Activated CD4-positive, alpha-beta T cell treated with anti-CD3 and anti-CD28 coated beads, Interleukin-2, amount 10 ng/mL, durations not matched to agents 7 days and 5 days (primary cell): ENCODE measurements at regions of chr2 and their contacts with region 1.

Region 1: GRCh38 chr2:106085181-106085940 is 108.7 kb downstream of the UXS1 start:
- DNase-seq: peak; percentile 70
- H3K4me3 Mint-ChIP-seq: no peak overlapping the region
- H3K27ac Mint-ChIP-seq: peak overlapping the region; percentile 76
- H3K4me1 Mint-ChIP-seq: peaks cover 48% of the 10 kb centered on the region
- H3K27me3 Mint-ChIP-seq: no peaks in the 10 kb centered on the region

Region 2: DNA sequence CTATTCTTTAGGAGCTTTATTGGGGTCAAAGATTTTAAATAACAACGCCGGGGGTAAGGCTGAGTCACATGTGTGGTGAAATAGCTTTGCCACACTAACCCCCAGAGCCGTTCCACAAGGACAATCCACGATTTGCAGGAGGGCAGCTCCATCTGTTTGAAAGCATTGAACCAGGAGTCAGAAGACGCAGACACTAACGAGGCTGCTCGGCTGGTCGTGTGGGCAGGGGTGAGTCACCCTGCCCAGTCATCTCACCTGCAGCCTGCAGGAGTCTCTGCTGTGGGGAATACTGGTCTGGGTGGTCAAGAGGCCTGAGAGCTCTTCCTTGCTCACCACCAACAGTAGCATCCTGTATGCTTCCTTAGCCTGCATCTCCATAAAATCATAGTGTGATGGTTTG is 489.8 kb before region 1 on chr2:
- CTCF ChIA-PET with region 1: no interaction called
- POLR2A ChIA-PET with region 1: no interaction called
- DNase-seq: no peak
- H3K4me3 Mint-ChIP-seq: no peak overlapping the region
- H3K27ac Mint-ChIP-seq: no peak overlapping the region
- H3K4me1 Mint-ChIP-seq: peaks cover 6% of the 10 kb centered on the region
- H3K27me3 Mint-ChIP-seq: no peaks in the 10 kb centered on the region

Region 3: DNA sequence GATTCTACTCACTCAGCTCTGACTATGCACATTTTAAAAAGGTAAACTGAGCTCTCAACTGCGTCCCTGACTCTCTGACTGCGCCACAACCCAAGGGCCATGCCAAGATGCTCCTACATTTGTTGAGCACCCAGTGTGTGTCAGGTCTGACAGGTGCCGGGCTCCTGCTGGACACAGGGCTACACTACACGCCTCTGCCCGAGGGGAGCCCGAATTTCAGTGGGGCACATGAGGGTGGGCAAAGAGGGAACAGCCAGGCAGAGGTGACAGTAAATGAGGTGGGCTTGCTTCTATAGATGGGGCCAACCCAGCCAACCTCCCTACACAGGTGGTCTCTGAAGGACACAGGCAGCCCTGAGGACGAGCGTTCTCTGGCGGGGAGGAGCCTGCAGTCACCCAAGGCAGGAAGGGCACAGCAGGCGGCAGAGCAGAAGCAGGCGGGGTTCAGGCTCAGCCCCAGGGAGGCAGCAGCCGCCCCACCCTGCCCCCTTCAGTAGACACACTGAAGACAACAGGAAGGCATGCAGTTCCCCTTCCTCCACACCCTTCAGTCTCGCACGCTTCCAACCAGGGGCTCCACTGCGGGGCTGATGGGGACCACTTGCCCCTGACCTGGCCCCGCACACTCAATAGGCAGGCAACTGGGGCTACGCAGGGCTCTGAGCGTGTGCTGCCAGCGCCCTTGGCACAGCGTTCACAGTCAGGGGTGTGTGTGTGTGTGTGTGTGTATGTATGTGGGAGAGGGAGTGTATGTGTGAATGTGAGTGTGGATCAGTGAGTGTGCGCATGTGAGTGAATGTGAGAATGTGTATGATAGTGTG is 10.3 kb after region 1 on chr2:
- CTCF ChIA-PET with region 1: interaction called, 18 read pairs
- POLR2A ChIA-PET with region 1: no interaction called
- DNase-seq: peak; percentile 91
- H3K4me3 Mint-ChIP-seq: peak overlapping the region; percentile 66
- H3K27ac Mint-ChIP-seq: peak overlapping the region; percentile 89
- H3K4me1 Mint-ChIP-seq: peaks cover 65% of the 10 kb centered on the region
- H3K27me3 Mint-ChIP-seq: no peaks in the 10 kb centered on the region